HEK293 (cell line): ENCODE measurements at regions of chr16 and their contacts with region 1.

Region 1: DNA sequence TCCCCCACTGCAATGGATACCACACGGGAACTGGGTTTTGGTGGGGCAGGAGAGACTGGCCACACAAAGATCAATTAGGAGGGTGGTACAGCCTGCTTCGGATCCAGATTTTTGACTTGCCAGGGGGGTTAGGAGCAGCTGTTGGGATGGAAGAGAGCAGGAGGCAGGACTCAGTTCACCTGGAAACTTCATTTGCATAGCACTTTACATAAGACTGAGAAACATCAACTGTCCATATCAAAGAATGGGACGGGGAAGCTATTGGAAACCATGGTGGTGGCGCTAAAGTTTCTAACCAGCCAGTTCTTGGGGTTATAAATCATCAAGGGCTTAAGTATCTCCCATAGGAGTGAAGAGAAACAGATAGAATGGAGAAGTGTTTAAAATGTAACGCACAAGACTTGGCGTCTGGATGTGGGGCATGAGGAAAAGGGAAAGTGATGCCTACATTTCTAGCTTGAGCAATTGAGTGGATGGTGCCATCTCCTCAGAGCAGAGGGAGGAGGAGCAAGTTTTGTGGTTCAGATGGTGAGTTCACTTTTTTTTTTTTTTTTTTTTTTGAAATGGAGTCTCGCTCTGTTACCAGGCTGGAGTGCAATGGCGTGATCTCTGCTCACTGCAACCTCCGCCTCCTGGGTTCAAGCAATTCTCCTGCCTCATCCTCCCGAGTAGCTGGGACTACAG is 6.4 kb upstream of the SRCAP start:
- H3K4me3 ChIP-seq: no peak overlapping the region
- H3K27ac ChIP-seq: no peak overlapping the region
- H3K4me1 ChIP-seq: no peaks in the 10 kb centered on the region
- CTCF ChIP-seq: no peak

Region 2: GRCh38 chr16:30669896-30670797 is 22.4 kb before region 1 on chr16:
- CTCF ChIA-PET with region 1: interaction called, 6 read pairs
- POLR2A ChIA-PET with region 1: interaction called, 13 read pairs
- H3K4me3 ChIP-seq: no peak overlapping the region
- H3K27ac ChIP-seq: no peak overlapping the region
- H3K4me1 ChIP-seq: no peaks in the 10 kb centered on the region
- CTCF ChIP-seq: no peak

Region 3: GRCh38 chr16:30677931-30678585 is 14.5 kb before region 1 on chr16:
- CTCF ChIA-PET with region 1: interaction called, 28 read pairs
- POLR2A ChIA-PET with region 1: interaction called, 6 read pairs
- H3K4me3 ChIP-seq: no peak overlapping the region
- H3K27ac ChIP-seq: no peak overlapping the region
- H3K4me1 ChIP-seq: no peaks in the 10 kb centered on the region
- CTCF ChIP-seq: no peak